ENCODE measurements at regions of chr17 and their contacts with region 1.

Region 1: GRCh38 chr17:13721705-13722104 is 120.0 kb upstream of the HS3ST3A1 start:
- DNase-seq: no peak
- ATAC-seq: no peak
- H3K4me3 ChIP-seq: no peak overlapping the region
- H3K27ac ChIP-seq: no peak overlapping the region
- H3K4me1 ChIP-seq: no peaks in the 10 kb centered on the region
- H3K27me3 ChIP-seq: no peaks in the 10 kb centered on the region
- CTCF ChIP-seq: no peak
- EP300 ChIP-seq: no peak
- POLR2A ChIP-seq: no peak
- RAD21 ChIP-seq: no peak

Region 2: DNA sequence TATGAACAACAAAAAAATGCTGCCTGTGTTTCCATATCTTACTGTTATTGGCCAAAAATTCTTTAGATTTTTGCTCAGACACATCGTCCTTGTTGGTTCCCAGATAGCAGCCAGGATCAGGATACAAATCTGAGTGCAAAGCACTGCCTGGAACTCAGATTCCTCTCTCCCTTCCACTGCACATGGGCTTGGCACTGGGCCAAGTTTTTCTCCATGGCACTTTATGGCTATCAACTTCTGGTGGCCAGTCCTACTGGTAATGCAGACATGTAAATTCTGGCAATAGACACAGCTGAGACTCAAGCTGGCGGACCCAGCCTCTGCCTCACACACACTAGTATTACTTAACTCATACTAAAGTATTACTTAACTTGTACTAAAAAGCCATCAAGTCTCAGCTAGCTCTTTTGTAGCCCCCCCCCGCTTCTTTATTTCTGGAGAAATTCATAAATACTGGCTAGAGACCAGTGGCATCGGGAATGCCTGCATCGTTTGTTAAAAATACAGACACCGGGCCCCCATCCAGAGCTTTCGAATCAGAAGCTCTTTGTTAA is 166.4 kb after region 1 on chr17:
- CTCF ChIA-PET with region 1: no interaction called
- POLR2A ChIA-PET with region 1: no interaction called
- RAD21 ChIA-PET with region 1: no interaction called
- SMC1A ChIA-PET with region 1: no interaction called
- in situ Hi-C with region 1: no loop called
- intact Hi-C with region 1: no loop called
- DNase-seq: no peak
- ATAC-seq: no peak
- H3K4me3 ChIP-seq: no peak overlapping the region
- H3K27ac ChIP-seq: no peak overlapping the region
- H3K4me1 ChIP-seq: no peaks in the 10 kb centered on the region
- H3K27me3 ChIP-seq: no peaks in the 10 kb centered on the region
- CTCF ChIP-seq: no peak
- EP300 ChIP-seq: no peak
- POLR2A ChIP-seq: no peak
- RAD21 ChIP-seq: no peak

Region 3: DNA sequence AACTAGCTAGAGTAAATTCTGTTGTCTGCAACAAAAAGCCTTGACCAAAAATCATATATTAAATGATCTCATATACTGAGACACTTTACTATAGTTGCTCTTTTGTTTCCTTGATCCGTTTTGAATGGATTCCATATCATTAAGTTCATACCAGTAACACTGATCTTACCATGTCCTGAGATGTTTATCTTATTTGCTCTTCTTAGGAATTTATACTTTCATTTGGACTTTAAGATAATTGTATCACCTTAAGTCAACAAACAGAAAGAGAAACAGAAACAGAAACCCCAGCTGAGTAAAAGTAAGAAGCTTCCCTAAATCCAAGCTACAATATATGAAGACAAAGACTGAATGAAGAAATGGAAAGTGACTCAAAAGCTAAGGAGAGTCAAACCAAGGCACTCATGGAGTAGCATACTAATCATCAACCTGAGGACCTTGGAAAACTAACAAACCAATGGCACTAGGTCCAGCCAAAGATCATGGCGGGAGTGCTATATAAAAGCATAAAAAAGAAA is 241.1 kb after region 1 on chr17:
- CTCF ChIA-PET with region 1: no interaction called
- POLR2A ChIA-PET with region 1: no interaction called
- RAD21 ChIA-PET with region 1: no interaction called
- SMC1A ChIA-PET with region 1: no interaction called
- in situ Hi-C with region 1: no loop called
- intact Hi-C with region 1: no loop called
- DNase-seq: no peak
- ATAC-seq: no peak
- H3K4me3 ChIP-seq: no peak overlapping the region
- H3K27ac ChIP-seq: no peak overlapping the region
- H3K4me1 ChIP-seq: no peaks in the 10 kb centered on the region
- H3K27me3 ChIP-seq: no peaks in the 10 kb centered on the region
- CTCF ChIP-seq: no peak
- EP300 ChIP-seq: no peak
- POLR2A ChIP-seq: no peak
- RAD21 ChIP-seq: no peak

Region 4: GRCh38 chr17:14427900-14428647 is 706.4 kb after region 1 on chr17:
- CTCF ChIA-PET with region 1: no interaction called
- POLR2A ChIA-PET with region 1: no interaction called
- RAD21 ChIA-PET with region 1: no interaction called
- SMC1A ChIA-PET with region 1: no interaction called
- in situ Hi-C with region 1: no loop called
- intact Hi-C with region 1: loop called (anchors 10 kb)
- DNase-seq: peak; percentile 3
- ATAC-seq: no peak
- H3K4me3 ChIP-seq: no peak overlapping the region
- H3K27ac ChIP-seq: peak overlapping the region; percentile 19; the same call in 1 of the 2 replicates
- H3K4me1 ChIP-seq: no peaks in the 10 kb centered on the region; the same call in 1 of the 2 replicates
- H3K27me3 ChIP-seq: no peaks in the 10 kb centered on the region
- CTCF ChIP-seq: no peak
- EP300 ChIP-seq: no peak
- POLR2A ChIP-seq: no peak
- RAD21 ChIP-seq: no peak